Right ventricle myocardium inferior (tissue), 1 donor: ENCODE measurements at regions of chr17 and their contacts with region 1.

Region 1: DNA sequence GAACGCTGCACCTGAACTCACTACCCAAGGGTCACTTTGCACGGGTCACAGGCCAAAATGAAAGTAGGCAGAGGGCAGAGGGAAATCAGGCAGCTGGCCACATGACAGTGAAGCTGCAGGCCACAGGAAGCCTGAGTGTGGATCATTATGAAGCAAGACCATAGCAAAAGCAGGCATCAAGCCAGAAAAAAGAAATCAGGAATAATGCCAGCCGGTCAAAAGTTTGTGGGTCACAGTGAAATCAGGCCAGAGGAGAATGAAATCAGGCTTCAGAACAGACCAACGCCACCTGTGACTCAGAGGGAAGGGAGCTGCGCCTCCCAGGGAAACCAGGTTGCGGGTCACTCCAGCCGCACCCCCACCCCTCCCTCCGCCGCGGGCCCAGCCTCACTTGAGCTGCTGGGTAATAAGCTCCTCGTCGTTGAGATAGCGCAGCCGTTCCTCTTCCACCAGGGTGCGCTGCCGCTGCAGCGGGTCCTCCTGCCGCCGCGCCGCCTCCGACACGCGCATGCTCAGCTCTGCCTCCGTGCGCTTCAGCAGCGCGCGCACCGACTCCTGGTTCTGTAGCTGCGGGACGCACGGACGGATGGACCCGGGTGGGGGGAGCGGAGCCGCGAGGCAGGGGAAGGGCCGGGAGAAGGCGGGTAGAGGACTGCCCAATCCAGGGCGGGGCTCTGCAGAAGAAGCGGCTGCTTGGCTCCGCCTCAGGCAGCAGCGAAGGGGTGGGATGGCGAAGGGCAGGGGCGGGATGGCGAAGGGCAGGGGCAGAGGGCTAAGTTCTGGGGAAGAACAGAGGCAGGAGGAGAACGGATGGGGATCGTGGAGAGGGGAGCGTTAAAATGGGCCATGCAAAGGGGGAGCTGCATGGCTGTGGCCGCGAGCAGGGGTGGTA is 47.7 kb downstream of the SRCIN1 start:
- DNase-seq: peak; percentile 95
- ATAC-seq: peak; percentile 94

Region 2: DNA sequence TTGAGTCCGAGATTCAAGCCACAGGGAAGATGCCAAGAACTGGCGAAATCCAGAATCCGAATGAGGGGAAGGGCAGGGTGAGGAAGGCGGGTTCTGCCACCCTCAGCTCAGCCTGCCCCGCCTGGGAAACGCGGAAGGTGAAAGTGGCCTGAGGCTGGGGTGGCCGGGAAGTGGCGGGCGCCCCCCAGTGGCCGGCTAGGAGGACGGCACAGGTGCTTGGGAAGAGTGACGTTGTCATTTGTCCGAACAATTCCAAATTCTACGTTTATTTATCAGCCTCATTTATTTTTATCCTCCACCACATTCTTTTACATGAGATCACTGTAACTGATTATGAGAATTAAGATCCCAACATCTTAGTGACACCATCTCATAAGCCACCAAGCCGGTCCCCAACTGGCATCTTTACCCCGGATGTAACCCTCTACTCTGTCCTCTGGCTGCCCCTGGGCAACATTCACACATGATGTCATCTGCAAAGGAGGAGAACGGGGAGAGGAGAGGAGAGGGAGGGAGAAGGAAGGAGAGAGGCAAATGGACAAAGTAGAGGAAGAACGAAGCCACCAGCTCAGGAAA is 26.4 kb after region 1 on chr17:
- intact Hi-C with region 1: loop called (anchors 1 kb)
- DNase-seq: peak; percentile 83
- ATAC-seq: peak; percentile 79

Region 3: DNA sequence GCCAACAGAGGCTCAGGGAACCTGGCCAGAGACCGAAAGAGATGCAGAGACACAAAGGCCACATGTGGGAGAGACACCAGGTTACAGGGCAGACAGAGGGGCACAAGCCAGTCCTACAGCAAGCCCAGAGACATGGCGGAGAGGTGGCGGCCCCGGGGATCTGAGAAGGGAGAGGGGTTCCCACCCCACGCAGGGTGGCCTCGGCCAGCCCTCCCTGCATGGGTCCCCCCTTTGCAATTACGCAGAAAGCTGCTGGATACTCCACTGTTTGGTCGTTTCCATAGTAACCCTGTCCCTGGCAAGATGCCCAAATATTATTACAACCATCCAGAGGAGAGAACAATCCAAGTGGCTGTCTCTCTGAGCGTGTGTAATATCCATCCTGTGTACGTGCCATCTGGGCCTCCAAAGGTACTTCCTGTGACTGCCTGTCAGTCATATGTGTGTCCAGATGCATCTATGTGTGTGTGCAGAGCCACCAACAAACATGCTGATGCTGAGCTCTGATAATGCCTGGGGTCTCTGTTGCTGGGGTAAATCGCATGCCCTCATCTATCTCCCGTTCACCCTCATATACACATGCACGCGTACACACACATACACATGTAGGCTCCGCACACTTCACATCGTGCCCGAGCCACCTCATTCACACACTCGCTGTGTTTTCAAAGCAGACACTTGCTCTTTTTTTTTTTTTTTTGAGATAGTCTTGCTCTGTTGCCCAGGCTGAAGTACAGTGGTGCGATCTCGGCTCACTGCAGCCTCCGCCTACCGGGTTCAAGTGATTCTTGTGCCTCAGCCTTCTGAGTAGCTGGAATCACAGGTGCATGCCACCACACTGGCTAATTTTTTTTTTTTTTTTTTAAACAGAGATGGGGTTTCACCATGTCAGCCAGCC is 184.6 kb after region 1 on chr17:
- intact Hi-C with region 1: loop called (anchors 5 kb)
- DNase-seq: no peak
- ATAC-seq: peak; percentile 68